A549 (cell line): ENCODE measurements at regions of chr2 and their contacts with region 1.

Region 1: DNA sequence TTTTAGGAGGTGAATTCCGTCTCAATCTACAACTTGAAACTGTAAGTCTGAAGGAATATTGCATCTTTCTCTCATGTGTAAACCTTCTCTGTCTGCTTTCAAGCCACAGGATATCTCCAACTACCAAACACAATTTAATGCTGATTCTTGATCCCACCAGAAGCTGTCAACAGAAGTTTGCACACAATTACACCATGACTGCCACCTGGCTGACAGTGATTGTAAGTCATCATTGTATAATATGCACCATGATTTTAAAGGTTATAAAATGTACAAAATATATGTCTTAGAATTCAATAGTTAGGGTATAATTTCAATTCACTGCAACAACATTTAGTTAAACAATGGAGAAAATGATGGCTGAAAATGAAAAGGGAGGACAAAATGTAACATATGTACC is 18.4 kb downstream of the PREPL start:
- DNase-seq: peak; percentile 28 to 66
- ATAC-seq: peak; percentile 62 to 81; a peak in 3 of 6 replicates
- H3K4me3 ChIP-seq: no peak overlapping the region
- H3K27ac ChIP-seq: no peak overlapping the region
- H3K4me1 ChIP-seq: no peaks in the 10 kb centered on the region
- CTCF ChIP-seq: peak; percentile 68
- EP300 ChIP-seq: no peak
- POLR2A ChIP-seq: no peak
- RAD21 ChIP-seq: peak; percentile 77 to 93

Region 2: DNA sequence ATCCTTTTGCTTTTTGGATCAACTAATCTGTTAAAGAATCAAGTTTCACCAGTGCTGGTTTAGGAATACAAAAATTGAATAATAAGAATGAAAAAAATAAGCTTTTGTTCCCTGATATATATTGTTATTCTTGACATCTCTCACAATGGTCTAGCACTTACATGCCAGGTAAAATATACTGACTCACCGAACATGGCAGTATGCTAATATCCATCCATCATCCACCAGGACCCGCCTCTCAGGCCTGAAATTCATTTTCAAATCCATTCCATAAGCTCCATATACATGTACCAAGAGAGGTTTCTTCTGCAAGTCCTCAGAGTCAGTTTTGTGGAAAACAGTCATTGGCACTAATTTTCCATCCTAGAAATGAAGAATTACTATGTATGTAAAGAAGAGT is 14.1 kb before region 1 on chr2:
- CTCF ChIA-PET with region 1: interaction called, 14 read pairs
- POLR2A ChIA-PET with region 1: no interaction called
- DNase-seq: no peak
- ATAC-seq: no peak
- H3K4me3 ChIP-seq: no peak overlapping the region
- H3K27ac ChIP-seq: no peak overlapping the region
- H3K4me1 ChIP-seq: peaks cover 17% of the 10 kb centered on the region
- CTCF ChIP-seq: no peak
- EP300 ChIP-seq: no peak
- POLR2A ChIP-seq: no peak
- RAD21 ChIP-seq: no peak